SK-N-SH (cell line): ENCODE measurements at regions of chr2 and their contacts with region 1.

Region 1: DNA sequence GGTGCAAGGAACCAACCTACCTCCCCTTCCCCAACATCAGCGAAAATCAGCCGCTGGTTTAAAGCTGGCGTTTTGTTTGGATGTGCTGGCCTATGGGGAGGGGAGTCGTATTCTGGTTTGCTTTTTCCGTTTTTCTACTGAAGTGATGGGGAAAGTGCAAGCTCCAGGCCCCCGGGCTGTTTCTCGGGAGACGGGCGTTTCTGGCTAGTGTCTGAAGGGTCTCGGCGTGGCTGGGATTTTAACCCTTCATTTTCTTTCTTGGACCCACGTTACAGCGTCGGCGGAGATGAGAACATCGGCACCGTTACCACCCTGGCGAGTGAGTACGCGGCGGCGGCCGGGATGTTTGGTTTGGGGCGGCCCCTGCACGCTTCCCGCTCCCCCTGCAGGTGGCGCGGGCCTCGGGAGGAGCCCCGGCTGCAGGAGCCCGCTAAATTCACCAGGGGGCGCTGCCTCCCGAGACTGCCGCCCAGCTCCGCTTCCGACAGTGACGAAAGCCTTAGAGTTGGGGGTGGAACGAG is 70.7 kb downstream of the PLB1 start:
- DNase-seq: peak; percentile 98
- H3K4me3 ChIP-seq: peak overlapping the region; percentile 62
- H3K27ac ChIP-seq: peak overlapping the region; percentile 36 to 71; a peak in 3 of 4 replicates
- H3K4me1 ChIP-seq: peaks cover 0 to 7% of the 10 kb centered on the region in 2 experiments; a peak in 1 of 4 replicates
- H3K27me3 ChIP-seq: no peaks in the 10 kb centered on the region
- CTCF ChIP-seq: peak; percentile 99
- EP300 ChIP-seq: no peak
- RAD21 ChIP-seq: peak; percentile 85

Region 2: GRCh38 chr2:27653397-27653796 is 913.2 kb before region 1 on chr2:
- CTCF ChIA-PET with region 1: no interaction called
- POLR2A ChIA-PET with region 1: no interaction called
- DNase-seq: no peak
- H3K4me3 ChIP-seq: no peak overlapping the region
- H3K27ac ChIP-seq: no peak overlapping the region
- H3K4me1 ChIP-seq: no peaks in the 10 kb centered on the region
- H3K27me3 ChIP-seq: no peaks in the 10 kb centered on the region
- CTCF ChIP-seq: no peak
- EP300 ChIP-seq: no peak
- RAD21 ChIP-seq: no peak

Region 3: GRCh38 chr2:28452534-28453081 is 114.0 kb before region 1 on chr2:
- CTCF ChIA-PET with region 1: interaction called, 10 read pairs
- POLR2A ChIA-PET with region 1: no interaction called
- DNase-seq: peak; percentile 83
- H3K4me3 ChIP-seq: no peak overlapping the region; a peak in 1 of 4 replicates
- H3K27ac ChIP-seq: no peak overlapping the region
- H3K4me1 ChIP-seq: peaks cover 3 to 24% of the 10 kb centered on the region in 2 experiments; a peak in 2 of 4 replicates
- H3K27me3 ChIP-seq: no peaks in the 10 kb centered on the region
- CTCF ChIP-seq: peak; percentile 96
- EP300 ChIP-seq: no peak
- RAD21 ChIP-seq: peak; percentile 87

Region 4: DNA sequence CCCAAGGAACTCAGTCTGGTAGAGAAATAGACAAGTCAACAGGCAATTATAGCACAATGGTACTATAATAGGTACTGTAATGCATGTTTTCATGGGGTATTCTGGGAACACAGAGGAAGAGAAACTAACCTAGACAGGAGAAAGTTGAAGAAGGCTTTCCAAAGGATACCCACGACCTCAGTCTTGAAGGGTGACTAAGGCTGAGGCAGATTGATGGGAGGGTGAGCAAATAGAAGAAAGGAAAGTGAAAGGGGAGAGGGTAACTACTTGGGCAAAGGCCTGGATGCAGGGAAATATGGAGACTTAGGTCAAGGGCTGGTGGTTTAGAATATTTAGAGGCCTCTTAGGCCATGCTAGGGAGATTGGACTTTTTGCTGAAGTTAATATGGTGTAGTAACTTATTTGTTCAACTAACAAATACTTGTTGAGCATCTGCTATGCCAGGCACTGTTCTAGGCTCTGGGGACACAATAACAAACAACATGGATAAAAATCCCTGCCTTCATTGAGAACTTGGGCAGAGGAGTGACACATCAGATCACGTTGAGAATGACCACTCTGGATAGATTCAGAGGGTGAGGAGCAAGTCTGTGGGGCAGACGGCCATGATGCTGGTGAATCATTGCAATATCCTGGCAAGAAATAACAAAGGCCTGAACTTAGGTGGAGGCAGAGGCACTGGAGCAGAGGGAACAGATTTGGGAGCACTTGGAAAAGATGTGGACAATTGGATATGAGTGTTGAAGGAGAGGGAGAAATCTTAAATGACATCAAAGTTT is 14.3 kb before region 1 on chr2:
- CTCF ChIA-PET with region 1: interaction called, 83 read pairs
- POLR2A ChIA-PET with region 1: interaction called, 4 read pairs
- DNase-seq: no peak
- H3K4me3 ChIP-seq: no peak overlapping the region
- H3K27ac ChIP-seq: no peak overlapping the region
- H3K4me1 ChIP-seq: peaks cover 0 to under 1% of the 10 kb centered on the region in 2 experiments; a peak in 1 of 4 replicates
- H3K27me3 ChIP-seq: no peaks in the 10 kb centered on the region
- CTCF ChIP-seq: no peak
- EP300 ChIP-seq: no peak
- RAD21 ChIP-seq: no peak

Region 5: DNA sequence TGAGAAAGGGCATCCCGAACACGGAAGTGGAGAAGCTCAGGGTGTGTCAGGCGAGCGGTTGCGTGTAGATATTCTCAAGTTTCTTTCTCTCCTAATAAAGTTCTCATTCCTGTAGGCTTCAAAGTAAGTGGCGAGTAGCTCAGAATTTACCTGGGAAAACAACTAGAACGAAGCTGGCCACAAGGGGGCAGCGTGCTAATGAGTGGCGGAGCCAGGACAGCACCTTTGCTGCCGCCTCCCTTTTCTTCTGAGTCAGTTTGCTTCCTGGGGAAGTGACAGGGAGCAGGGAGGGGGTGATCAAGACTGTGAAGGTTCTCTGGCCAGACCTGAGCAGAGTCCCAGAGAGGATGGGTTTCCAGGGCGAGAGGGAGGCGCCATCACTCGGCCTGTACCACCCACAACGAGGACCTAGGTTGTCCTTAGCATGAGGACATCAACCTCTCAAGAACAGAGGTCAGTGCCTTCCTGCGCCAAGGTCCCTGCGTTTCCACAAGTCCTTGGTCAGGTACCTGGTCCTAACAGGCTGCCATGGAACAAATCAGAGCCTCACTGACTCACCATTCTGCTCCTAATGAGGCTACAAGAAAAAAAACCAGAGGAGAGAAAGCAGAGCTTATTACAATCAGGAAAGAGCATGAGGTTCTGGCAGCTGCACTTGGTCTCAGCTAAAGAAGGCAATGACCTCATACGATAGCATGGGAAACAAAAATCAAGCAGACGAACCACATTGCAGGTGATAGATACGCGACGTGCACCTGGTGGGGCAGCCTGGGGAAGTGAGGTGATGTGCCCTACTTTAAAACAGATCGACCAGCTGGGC is 27.9 kb after region 1 on chr2:
- CTCF ChIA-PET with region 1: interaction called, 50 read pairs
- POLR2A ChIA-PET with region 1: interaction called, 3 read pairs
- DNase-seq: peak; percentile 85
- H3K4me3 ChIP-seq: no peak overlapping the region; a peak in 1 of 4 replicates
- H3K27ac ChIP-seq: peak overlapping the region in 1 of 2 experiments; percentile 33; a peak in 2 of 4 replicates
- H3K4me1 ChIP-seq: peaks cover 4 to 8% of the 10 kb centered on the region in 2 experiments; a peak in 2 of 4 replicates
- H3K27me3 ChIP-seq: no peaks in the 10 kb centered on the region
- CTCF ChIP-seq: peak; percentile 97
- EP300 ChIP-seq: no peak
- RAD21 ChIP-seq: peak; percentile 91

Region 6: GRCh38 chr2:28626891-28627421 is 60.4 kb after region 1 on chr2:
- CTCF ChIA-PET with region 1: no interaction called
- POLR2A ChIA-PET with region 1: no interaction called
- DNase-seq: no peak
- H3K4me3 ChIP-seq: no peak overlapping the region
- H3K27ac ChIP-seq: peak overlapping the region; percentile 25 to 48; a peak in 2 of 4 replicates
- H3K4me1 ChIP-seq: no peaks in the 10 kb centered on the region; a peak in 2 of 4 replicates
- H3K27me3 ChIP-seq: no peaks in the 10 kb centered on the region
- CTCF ChIP-seq: no peak
- EP300 ChIP-seq: 0 out of 4 replicates have a peak, but pooled peaks of 1 of the 2 experiments have one; percentile 10
- RAD21 ChIP-seq: no peak

Region 7: GRCh38 chr2:28751252-28751955 is 184.8 kb after region 1 on chr2 and contains the start of gene PPP1CB:
- CTCF ChIA-PET with region 1: interaction called, 32 read pairs
- POLR2A ChIA-PET with region 1: interaction called, 11 read pairs
- DNase-seq: peak; percentile 99
- H3K4me3 ChIP-seq: peak within 1 kb of the TSS; percentile 75 to 98
- H3K27ac ChIP-seq: peak within 1 kb of the TSS; percentile 91 to 100
- H3K4me1 ChIP-seq: peaks cover 15 to 22% of the 10 kb centered on the region in 2 experiments; a peak in 3 of 4 replicates
- H3K27me3 ChIP-seq: no peaks in the 10 kb centered on the region
- CTCF ChIP-seq: 0 out of 2 replicates have a peak, but pooled peaks have one; percentile 22
- EP300 ChIP-seq: no peak; a peak in 1 of 4 replicates
- RAD21 ChIP-seq: peak; percentile 31
- polyA plus RNA-seq, gene PPP1CB: 21.7 and 24.7 TPM in 2 replicates

Region 8: GRCh38 chr2:28870146-28870891 is 303.7 kb after region 1 on chr2 and contains the start of gene TRMT61B:
- CTCF ChIA-PET with region 1: interaction called, 13 read pairs
- POLR2A ChIA-PET with region 1: no interaction called
- DNase-seq: peak; percentile 99
- H3K4me3 ChIP-seq: peak within 1 kb of the TSS; percentile 80 to 90
- H3K27ac ChIP-seq: peak within 1 kb of the TSS; percentile 60 to 71
- H3K4me1 ChIP-seq: peaks cover 10 to 17% of the 10 kb centered on the region in 2 experiments; a peak in 3 of 4 replicates
- H3K27me3 ChIP-seq: peaks cover 3% of the 10 kb centered on the region; the same call in 1 of the 2 replicates
- CTCF ChIP-seq: no peak
- EP300 ChIP-seq: peak in 1 of 2 experiments; percentile 20; a peak in 1 of 4 replicates
- RAD21 ChIP-seq: no peak
- polyA plus RNA-seq, gene TRMT61B: 11.0 and 11.4 TPM in 2 replicates